Left ventricle myocardium superior (tissue), 1 donor: ENCODE measurements at regions of chr21 and their contacts with region 1.

Region 1: GRCh38 chr21:40300298-40300697 is 433.1 kb downstream of the PCP4 start:
- DNase-seq: no peak
- ATAC-seq: no peak

Region 2: GRCh38 chr21:40095477-40095876 is 204.8 kb before region 1 on chr21:
- intact Hi-C with region 1: no loop called
- DNase-seq: no peak
- ATAC-seq: no peak

Region 3: GRCh38 chr21:40143822-40144525 is 156.3 kb before region 1 on chr21:
- intact Hi-C with region 1: loop called (anchors 5 kb)
- DNase-seq: peak; percentile 40
- ATAC-seq: peak; percentile 55

Region 4: DNA sequence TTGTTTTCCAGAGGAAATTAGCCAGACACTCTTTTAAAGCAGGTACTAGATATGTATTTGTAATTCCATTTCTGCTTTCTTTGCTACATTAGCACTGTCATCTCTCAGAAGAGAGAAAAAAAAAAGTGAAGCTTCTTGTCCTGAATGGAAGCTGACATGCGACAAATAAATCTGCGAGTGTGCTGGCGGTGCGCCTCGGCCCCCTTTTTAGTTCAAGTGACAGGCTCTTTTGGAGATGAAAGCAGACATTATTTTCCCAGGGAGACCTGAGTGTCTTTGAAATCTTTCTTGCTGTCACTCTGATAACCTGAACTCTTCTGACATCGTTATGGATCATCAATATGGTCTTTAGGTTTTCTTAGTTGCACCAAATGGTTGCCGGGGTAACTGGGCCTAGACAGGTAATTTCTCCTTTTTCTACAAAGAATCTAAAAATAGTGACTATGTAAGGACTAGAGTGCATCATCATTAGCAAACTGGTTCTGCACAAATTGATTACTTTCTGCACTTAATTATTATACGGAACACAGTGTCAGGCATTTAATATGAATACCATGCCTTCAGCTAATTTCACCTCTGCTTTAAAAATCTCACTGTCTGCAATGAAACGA is 45.5 kb after region 1 on chr21:
- intact Hi-C with region 1: loop called (anchors 10 kb)
- DNase-seq: no peak
- ATAC-seq: no peak